GM23248 (cell line): ENCODE measurements at regions of chr14 and their contacts with region 1.

Region 1: DNA sequence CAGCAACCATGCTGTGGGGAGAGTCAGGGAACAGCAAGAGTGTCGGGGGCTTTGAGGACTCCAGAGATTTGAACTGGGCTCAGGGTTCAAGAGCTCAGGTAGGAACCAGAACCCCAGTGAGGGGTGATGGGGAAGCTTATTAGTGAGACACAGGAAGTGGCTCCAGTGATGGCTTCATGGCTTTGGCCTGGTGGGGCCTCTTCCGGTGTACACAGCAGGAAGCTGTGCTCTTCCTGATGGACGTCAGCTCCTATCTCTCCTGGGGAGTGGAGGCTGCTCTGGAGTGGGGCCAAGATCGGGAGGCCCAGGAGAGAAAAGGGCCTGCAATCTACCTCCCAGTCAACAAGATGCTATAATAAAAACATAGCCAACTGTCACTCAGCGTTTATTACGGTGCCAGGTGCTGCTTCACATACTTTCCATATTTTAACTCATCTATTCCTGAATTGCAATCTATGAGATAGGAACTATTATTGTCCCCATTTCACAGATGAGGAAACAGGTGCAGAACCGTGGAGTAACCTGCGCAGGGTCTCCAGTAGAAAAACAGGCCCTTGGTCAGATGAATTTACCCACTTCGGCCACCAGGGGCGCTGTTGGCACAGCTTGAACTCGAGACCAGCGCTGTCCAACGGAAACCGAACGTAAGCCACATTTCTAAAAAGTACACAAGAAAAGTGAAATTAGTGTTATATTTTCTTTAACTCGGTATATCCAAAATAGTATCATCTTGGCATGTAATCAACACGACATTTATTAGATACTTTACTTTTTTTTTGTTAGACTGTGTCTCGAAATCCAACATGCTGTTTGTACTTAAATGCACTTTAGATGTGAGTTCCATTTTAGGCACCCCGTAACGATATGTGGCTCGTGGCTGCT is 63.6 kb upstream of the DLK1 start:
- DNase-seq: peak; percentile 73
- H3K4me3 ChIP-seq: peak overlapping the region; percentile 17; the same call in 1 of the 2 replicates
- H3K27ac ChIP-seq: no peak overlapping the region
- H3K4me1 ChIP-seq: peaks cover 4% of the 10 kb centered on the region; the same call in 1 of the 2 replicates
- H3K27me3 ChIP-seq: peaks cover 15% of the 10 kb centered on the region

Region 2: DNA sequence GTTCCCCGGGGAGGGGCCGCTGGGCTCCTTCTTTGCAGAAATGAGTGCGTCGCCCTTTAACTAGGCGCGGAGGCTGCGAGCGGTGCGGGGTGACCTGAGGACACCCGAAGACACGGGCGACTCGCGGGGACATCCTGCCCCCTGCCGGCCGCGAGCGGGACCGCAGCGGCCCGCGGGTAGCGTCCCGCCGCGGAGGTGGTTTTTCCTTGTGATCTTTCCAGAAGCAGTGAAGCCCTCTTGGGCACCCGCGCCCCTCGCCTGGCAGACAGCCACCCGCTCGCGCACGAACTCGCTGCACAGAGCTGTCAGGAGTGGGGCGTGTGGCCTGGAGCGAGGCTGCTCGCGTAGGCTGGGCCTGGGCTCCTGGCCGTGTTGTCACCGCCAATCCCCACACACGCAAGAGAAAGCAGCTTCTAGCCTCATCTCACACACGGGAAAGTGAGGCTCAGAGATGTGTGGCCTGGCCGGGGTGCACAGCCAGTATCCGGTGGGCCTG is 965.4 kb after region 1 on chr14:
- in situ Hi-C with region 1: loop called (anchors 10 kb)
- DNase-seq: peak; percentile 84
- H3K4me3 ChIP-seq: peak overlapping the region; percentile 59
- H3K27ac ChIP-seq: no peak overlapping the region
- H3K4me1 ChIP-seq: peaks cover 5% of the 10 kb centered on the region; the same call in 1 of the 2 replicates
- H3K27me3 ChIP-seq: peaks cover 16% of the 10 kb centered on the region